Activated CD4-positive, alpha-beta memory T cell treated with anti-CD3 and anti-CD28 coated beads for 36 hours (primary cell): ENCODE measurements at regions of chr1 and their contacts with region 1.

Region 1: DNA sequence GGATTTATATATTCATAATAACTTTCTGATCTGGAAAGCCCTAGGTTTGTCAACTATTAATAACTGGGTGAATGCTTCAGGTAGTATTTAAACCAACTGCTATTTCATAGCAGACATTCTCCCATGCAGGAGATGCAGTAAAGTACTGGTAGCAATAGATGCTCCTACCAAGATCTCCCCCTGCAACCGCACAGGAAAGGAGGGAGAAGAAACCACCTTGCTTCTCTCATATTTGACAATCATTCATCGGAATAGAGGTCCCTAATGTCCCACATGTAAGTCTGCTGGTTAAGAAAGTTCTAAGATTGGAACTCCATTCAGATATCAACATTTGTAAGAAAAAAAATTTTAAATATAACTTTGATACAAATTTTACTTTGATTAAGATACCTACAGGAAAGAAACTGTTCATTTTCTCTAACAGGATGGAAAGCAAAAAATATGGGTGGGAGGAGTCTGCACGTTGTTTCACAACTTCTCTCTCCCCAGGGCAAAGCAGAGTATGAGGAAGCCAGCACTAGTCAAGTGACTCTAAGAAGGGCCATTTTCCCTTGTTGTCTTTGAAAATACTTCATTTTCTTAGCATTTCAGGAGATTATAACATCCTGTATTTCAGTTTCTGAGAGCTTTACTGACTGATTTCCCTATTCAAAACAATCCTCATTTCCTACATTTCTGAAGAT is at the start of gene PYHIN1:
- DNase-seq: peak; percentile 46
- H3K4me3 Mint-ChIP-seq: peak within 1 kb of the TSS; percentile 83
- H3K27ac Mint-ChIP-seq: peak within 1 kb of the TSS; percentile 84
- H3K4me1 Mint-ChIP-seq: peaks cover 50% of the 10 kb centered on the region
- H3K27me3 Mint-ChIP-seq: no peaks in the 10 kb centered on the region
- total RNA-seq, gene PYHIN1: 12.2 to 13.1 TPM

Region 2: GRCh38 chr1:158793604-158794003 is 137.6 kb before region 1 on chr1:
- CTCF ChIA-PET with region 1: no interaction called
- POLR2A ChIA-PET with region 1: no interaction called
- intact Hi-C with region 1: loop called (anchors 2 kb)
- DNase-seq: peak; percentile 56
- H3K4me3 Mint-ChIP-seq: no peak overlapping the region
- H3K27ac Mint-ChIP-seq: no peak overlapping the region
- H3K4me1 Mint-ChIP-seq: no peaks in the 10 kb centered on the region
- H3K27me3 Mint-ChIP-seq: peaks cover under 1% of the 10 kb centered on the region

Region 3: DNA sequence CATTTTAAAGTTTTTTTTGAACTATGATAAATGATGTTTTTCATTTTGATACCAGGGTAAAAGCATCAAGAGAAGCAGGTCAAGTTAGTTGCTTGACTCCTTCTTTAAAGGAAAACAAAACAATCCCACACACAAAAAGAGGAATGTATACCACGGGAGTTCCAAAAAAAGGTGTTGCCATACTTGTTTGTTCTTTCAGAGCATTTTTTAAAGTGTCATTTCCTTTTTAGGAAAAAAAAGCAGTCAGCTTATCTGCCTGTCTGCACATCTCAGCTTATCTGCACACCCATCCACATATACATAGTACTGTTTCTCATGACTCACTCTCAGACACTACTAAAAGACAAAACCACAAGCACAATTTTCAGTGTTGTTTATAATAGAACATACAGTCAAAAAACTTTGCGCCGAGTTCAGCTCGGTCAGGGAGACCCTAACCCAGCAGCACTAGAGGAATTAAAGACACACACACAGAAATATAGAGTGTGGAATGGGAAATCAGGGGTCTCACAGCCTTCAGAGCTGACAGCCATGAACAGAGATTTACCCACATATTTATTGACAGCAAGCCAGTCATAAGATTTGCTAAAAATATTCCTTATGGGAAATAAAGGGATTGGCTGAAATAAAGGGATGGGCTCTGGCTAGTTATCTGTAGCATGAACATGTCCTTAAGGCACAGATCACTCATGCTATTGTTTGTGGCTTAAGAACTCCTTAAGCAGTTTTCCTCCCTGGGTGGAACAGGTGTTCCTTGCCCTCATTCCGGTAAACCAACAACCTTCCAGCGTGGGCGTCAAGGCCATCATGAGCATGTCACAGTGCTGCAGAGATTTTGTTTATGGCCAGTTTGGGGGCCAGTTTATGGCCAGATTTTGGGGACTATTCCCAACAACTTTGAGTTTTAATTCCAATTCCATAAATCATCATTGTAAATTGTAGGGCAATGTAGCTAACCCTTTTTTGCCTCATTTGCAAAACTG is 111.4 kb before region 1 on chr1:
- CTCF ChIA-PET with region 1: no interaction called
- POLR2A ChIA-PET with region 1: no interaction called
- intact Hi-C with region 1: loop called (anchors 5 kb)
- DNase-seq: peak; percentile 40
- H3K4me3 Mint-ChIP-seq: peak overlapping the region; percentile 46
- H3K27ac Mint-ChIP-seq: peak overlapping the region; percentile 71
- H3K4me1 Mint-ChIP-seq: peaks cover 22% of the 10 kb centered on the region
- H3K27me3 Mint-ChIP-seq: peaks cover 2% of the 10 kb centered on the region

Region 4: DNA sequence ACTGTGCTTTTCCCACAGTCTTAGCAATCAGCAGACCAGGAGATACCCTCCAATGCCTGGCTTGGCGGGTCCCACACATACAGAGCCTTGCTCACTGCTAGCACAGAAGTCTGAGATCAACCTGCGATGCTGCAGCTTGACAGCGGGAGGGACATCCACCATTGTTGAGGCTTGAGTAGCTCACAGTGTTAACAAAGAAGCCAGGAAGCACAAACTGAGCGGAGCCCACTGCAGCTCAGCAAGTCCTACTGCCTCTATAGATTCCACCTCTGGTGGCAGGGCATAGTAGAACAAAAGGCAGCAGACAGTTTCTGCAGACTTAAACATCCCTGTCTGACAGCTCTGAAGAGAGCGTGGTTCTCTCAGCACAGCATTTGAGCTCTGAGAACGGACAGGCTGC is 66.6 kb before region 1 on chr1:
- CTCF ChIA-PET with region 1: no interaction called
- POLR2A ChIA-PET with region 1: no interaction called
- intact Hi-C with region 1: no loop called
- DNase-seq: no peak
- H3K4me3 Mint-ChIP-seq: no peak overlapping the region
- H3K27ac Mint-ChIP-seq: no peak overlapping the region
- H3K4me1 Mint-ChIP-seq: no peaks in the 10 kb centered on the region
- H3K27me3 Mint-ChIP-seq: no peaks in the 10 kb centered on the region

Region 5: DNA sequence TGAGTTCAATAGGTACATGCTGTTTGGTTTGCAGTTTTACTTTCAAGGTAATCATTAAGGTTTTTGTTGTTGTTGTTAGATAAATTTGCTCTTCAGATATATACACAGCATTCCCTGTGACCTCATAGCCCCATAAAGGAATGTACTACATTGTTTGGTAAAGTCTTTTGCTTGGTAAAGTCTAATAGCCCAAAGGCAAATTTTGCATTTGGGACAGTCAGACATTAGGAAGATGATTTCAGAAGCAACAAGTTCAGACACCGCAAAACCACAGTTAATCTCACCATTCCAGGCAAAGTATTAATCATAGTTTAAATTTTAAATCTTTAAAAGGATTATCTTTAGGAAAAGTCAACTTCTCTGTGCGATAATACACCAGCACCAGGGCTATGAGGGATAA is 32.5 kb before region 1 on chr1:
- CTCF ChIA-PET with region 1: no interaction called
- POLR2A ChIA-PET with region 1: no interaction called
- intact Hi-C with region 1: no loop called
- DNase-seq: no peak
- H3K4me3 Mint-ChIP-seq: no peak overlapping the region
- H3K27ac Mint-ChIP-seq: no peak overlapping the region
- H3K4me1 Mint-ChIP-seq: peaks cover 12% of the 10 kb centered on the region
- H3K27me3 Mint-ChIP-seq: peaks cover 2% of the 10 kb centered on the region

Region 6: DNA sequence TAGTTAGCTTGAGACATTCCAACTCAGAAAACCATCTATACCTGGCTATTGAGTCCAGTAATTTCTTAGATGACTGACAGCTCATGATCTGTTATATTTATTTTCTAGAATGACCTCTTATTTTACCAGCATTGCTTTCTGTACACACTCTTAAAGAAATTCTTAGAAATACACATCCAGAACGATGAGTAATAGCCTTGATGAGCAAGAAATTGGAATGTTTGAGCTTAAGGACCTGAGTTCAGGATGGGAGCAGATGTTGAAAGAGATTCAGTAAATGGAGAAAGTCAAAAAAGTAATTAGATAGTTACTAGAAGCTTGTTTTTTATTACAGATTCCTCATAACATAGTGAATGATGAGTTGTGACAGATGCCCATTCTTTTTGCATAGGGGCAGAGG is 11.9 kb after region 1 on chr1:
- CTCF ChIA-PET with region 1: no interaction called
- POLR2A ChIA-PET with region 1: no interaction called
- intact Hi-C with region 1: loop called (anchors 1 kb)
- DNase-seq: no peak
- H3K4me3 Mint-ChIP-seq: no peak overlapping the region
- H3K27ac Mint-ChIP-seq: no peak overlapping the region
- H3K4me1 Mint-ChIP-seq: peaks cover 39% of the 10 kb centered on the region
- H3K27me3 Mint-ChIP-seq: no peaks in the 10 kb centered on the region

Region 7: GRCh38 chr1:159009704-159010361 is 78.6 kb after region 1 on chr1 and contains the start of gene IFI16:
- CTCF ChIA-PET with region 1: no interaction called
- POLR2A ChIA-PET with region 1: interaction called, 3 read pairs
- intact Hi-C with region 1: loop called (anchors 1 kb)
- DNase-seq: peak; percentile 77
- H3K4me3 Mint-ChIP-seq: peak within 1 kb of the TSS; percentile 90
- H3K27ac Mint-ChIP-seq: peak within 1 kb of the TSS; percentile 100
- H3K4me1 Mint-ChIP-seq: peaks cover 51% of the 10 kb centered on the region
- H3K27me3 Mint-ChIP-seq: no peaks in the 10 kb centered on the region
- total RNA-seq, gene IFI16: 215 to 220 TPM

Region 8: DNA sequence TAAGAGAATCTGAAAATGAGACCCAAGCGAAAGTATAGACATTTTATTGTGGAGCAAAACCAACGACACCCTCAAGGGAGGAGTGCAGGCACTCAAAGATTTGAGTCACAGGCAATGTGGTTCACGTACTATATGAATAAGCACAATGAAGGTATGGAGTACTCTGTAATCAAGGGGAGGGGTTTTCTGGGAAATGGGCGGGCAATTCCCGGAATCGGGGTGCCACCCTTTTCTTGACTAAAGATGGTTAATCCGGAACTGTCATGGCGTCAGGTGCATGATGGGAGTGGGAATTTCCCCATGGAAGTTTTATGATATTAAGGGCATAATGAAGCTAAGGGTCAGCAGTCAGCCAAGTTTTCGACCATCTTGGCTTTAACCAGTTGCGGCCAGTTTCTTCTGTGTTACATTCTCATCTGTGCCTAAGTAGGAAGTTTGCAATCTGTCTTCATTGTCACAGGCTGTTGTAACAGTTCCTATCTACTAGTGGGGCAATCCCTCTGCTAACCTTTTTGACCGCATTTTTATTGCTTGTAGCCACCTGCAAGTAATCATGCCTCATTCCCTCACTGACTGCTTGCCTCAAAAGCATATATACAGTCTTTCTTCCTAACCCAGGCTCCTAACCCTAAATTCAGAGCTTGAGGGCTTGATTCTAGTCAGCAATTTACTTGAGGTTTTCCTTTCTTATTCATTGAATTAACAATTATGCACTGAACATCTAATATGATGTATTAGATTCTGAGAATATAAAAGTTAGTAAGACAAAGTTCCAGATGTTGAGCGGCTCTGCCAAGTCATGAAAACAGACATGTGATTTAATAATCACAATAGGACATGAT is 146.1 kb after region 1 on chr1:
- CTCF ChIA-PET with region 1: no interaction called
- POLR2A ChIA-PET with region 1: no interaction called
- intact Hi-C with region 1: loop called (anchors 2 kb)
- DNase-seq: peak; percentile 100
- H3K4me3 Mint-ChIP-seq: peak overlapping the region; percentile 95
- H3K27ac Mint-ChIP-seq: peak overlapping the region; percentile 97
- H3K4me1 Mint-ChIP-seq: peaks cover 52% of the 10 kb centered on the region
- H3K27me3 Mint-ChIP-seq: no peaks in the 10 kb centered on the region